ENCODE measurements at regions of chr2 and their contacts with region 1.

Region 1: GRCh38 chr2:205680067-205680466 is 2.2 kb upstream of the NRP2 start:
- DNase-seq: peak in 3 of 5 donors; percentile 42 to 63 (median 49)
- ATAC-seq: peak in 3 of 4 donors; percentile 38 to 61 (median 57)
- H3K4me3 ChIP-seq: no peak overlapping the region
- H3K27ac ChIP-seq: peak overlapping the region in 1 of 12 donors; percentile 93
- H3K4me1 ChIP-seq: peaks cover 0 to 33% (median 16%) of the 10 kb centered on the region in 12 donors
- H3K27me3 ChIP-seq: peaks cover 0 to 33% (median 7%) of the 10 kb centered on the region in 9 donors
- CTCF ChIP-seq: peak; percentile 40 to 73 (median 66)
- POLR2A ChIP-seq: no peak

Region 2: GRCh38 chr2:204260162-204260877 is 1419.7 kb before region 1 on chr2:
- intact Hi-C with region 1: loop called in 7 of 10 experiments (anchors 5 to 10 kb)
- DNase-seq: peak in 4 of 5 donors; percentile 50 to 70 (median 56)
- ATAC-seq: peak; percentile 65 to 82 (median 73)
- H3K4me3 ChIP-seq: peak overlapping the region in 1 of 12 donors; percentile 4
- H3K27ac ChIP-seq: peak overlapping the region in 1 of 12 donors; percentile 11
- H3K4me1 ChIP-seq: peaks cover 0 to 18% (median 9%) of the 10 kb centered on the region in 12 donors
- H3K27me3 ChIP-seq: peaks cover 0 to 3% (median 0%) of the 10 kb centered on the region in 9 donors
- CTCF ChIP-seq: peak; percentile 61 to 84 (median 78)
- POLR2A ChIP-seq: no peak

Region 3: DNA sequence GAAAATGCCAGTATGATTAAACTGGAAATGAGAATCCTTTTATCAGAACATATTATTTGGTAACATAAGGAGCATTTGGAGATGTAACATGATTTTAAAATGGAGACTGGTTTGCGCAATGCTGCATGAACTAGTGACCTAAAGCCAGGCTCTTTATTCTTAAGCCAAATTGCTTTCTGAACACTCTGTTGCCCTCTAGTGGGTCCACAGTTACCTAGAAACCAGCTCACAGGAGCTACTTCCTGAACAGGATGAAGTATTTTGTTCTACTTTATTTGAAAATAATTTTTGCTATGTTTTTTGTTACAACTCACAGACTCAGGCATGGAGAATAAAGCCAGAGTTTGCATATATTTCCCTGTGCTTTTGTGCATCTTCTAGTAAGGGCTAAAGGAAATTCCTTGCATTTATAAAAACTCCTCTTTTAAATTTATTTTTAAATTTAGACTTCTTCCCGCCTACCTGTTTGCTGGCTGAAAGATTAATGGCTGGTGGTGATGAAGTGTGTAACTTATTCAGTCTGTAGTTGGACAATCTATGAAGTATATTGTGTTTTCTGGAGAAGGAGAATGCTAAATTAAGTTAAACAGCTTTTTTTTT is 988.1 kb before region 1 on chr2:
- intact Hi-C with region 1: loop called in 5 of 10 experiments (anchors 10 kb)
- DNase-seq: peak in 3 of 5 donors; percentile 26 to 45 (median 36)
- ATAC-seq: peak; percentile 71 to 91 (median 82)
- H3K4me3 ChIP-seq: no peak overlapping the region
- H3K27ac ChIP-seq: peak overlapping the region in 1 of 12 donors; percentile 20
- H3K4me1 ChIP-seq: peaks cover 0 to 20% (median 0%) of the 10 kb centered on the region in 12 donors
- H3K27me3 ChIP-seq: no peaks in the 10 kb centered on the region
- CTCF ChIP-seq: peak; percentile 55 to 81 (median 74)
- POLR2A ChIP-seq: no peak

Region 4: DNA sequence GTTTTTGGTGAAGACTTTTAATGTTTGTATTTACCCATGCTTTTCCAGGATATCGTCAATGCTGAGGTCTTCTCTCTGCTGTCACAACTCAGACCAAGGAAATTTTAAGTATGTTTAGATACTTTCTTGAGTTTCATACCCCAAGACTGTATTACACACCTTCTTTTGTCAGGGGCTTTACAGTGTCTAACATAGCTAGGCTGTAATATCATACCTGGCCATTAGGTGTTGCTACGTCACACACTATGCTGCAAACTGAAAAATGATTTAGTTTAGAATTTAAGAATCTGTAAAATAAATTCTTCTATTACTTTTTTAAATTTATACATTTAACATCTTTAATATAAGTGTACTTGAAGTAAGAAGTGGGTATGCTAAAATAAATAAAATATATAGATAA is 356.1 kb before region 1 on chr2:
- intact Hi-C with region 1: loop called in 1 of 10 experiments (anchors 10 kb)
- DNase-seq: no peak
- ATAC-seq: no peak
- H3K4me3 ChIP-seq: no peak overlapping the region
- H3K27ac ChIP-seq: no peak overlapping the region
- H3K4me1 ChIP-seq: no peaks in the 10 kb centered on the region
- H3K27me3 ChIP-seq: no peaks in the 10 kb centered on the region
- CTCF ChIP-seq: peak in 5 of 12 donors; percentile 7 to 35 (median 27)
- POLR2A ChIP-seq: no peak

Region 5: GRCh38 chr2:205766779-205767359 is 86.8 kb after region 1 on chr2:
- intact Hi-C with region 1: loop called in 3 of 10 experiments (anchors 5 to 10 kb)
- DNase-seq: peak in 4 of 5 donors; percentile 35 to 60 (median 48)
- ATAC-seq: peak in 1 of 4 donors; percentile 49
- H3K4me3 ChIP-seq: no peak overlapping the region
- H3K27ac ChIP-seq: peak overlapping the region in 2 of 12 donors; percentile 58 to 85
- H3K4me1 ChIP-seq: peaks cover 0 to 32% (median 14%) of the 10 kb centered on the region in 12 donors
- H3K27me3 ChIP-seq: peaks cover 0 to 10% (median 2%) of the 10 kb centered on the region in 9 donors
- CTCF ChIP-seq: peak; percentile 78 to 90 (median 84)
- POLR2A ChIP-seq: no peak

Region 6: DNA sequence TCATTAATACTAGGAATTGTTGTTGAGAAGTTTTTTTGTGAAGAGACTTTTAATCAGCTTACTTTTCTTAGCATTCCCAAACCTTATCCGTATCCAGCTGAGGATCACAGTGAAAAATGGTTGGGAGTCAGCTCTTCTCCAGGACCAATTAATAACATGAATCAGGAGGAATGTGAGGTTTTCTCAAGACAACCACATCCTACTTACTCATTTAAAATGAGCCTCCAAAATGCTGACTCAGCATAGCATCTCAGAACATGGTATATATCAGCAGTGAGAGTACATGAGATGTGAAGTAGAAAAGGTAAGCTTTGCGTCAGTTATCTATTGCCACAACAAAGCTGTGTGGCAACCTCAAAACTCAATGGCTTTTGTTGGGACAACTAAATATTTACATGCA is 142.5 kb after region 1 on chr2:
- intact Hi-C with region 1: no loop called
- DNase-seq: no peak
- ATAC-seq: no peak
- H3K4me3 ChIP-seq: no peak overlapping the region
- H3K27ac ChIP-seq: no peak overlapping the region
- H3K4me1 ChIP-seq: no peaks in the 10 kb centered on the region
- H3K27me3 ChIP-seq: peaks cover 0 to 2% (median 0%) of the 10 kb centered on the region in 9 donors
- CTCF ChIP-seq: no peak
- POLR2A ChIP-seq: no peak

Measured in heart left ventricle (tissue), 16 donors.